HepG2 (cell line): ENCODE measurements at regions of chr3 and their contacts with region 1.

Region 1: GRCh38 chr3:51941798-51942602 is at the starts of genes PARP3 and RRP9:
- DNase-seq: peak; percentile 99
- ATAC-seq: peak; percentile 88
- H3K4me3 ChIP-seq: peak within 1 kb of the TSS; percentile 80 to 88 (median 84)
- H3K27ac ChIP-seq: peak within 1 kb of the TSS; percentile 93
- H3K4me1 ChIP-seq: peaks cover 33% of the 10 kb centered on the region
- H3K27me3 ChIP-seq: no peaks in the 10 kb centered on the region; a peak in 1 of 5 replicates
- CTCF ChIP-seq: peak; percentile 100
- EP300 ChIP-seq: peak in 1 of 2 experiments; percentile 20; a peak in 1 of 4 replicates
- POLR2A ChIP-seq: peak in 1 of 2 experiments; percentile 45; a peak in 1 of 4 replicates
- RAD21 ChIP-seq: peak; percentile 99
- total RNA-seq, gene PARP3: 7.7 and 11.2 TPM in 2 replicates
- total RNA-seq, gene RRP9: 39.4 and 44.0 TPM in 2 replicates

Region 2: GRCh38 chr3:51916418-51916817 is 25.6 kb before region 1 on chr3:
- CTCF ChIA-PET with region 1: no interaction called
- POLR2A ChIA-PET with region 1: no interaction called
- in situ Hi-C with region 1: no loop called
- intact Hi-C with region 1: no loop called
- DNase-seq: no peak
- ATAC-seq: no peak
- H3K4me3 ChIP-seq: no peak overlapping the region
- H3K27ac ChIP-seq: no peak overlapping the region
- H3K4me1 ChIP-seq: no peaks in the 10 kb centered on the region
- H3K27me3 ChIP-seq: 0 out of 5 replicates have a peak, but pooled peaks cover 0 to 1% of the 10 kb centered on the region in 2 experiments
- CTCF ChIP-seq: no peak
- EP300 ChIP-seq: no peak
- POLR2A ChIP-seq: no peak
- RAD21 ChIP-seq: no peak

Region 3: GRCh38 chr3:51967384-51968169 is 25.6 kb after region 1 on chr3 and contains the start of gene PCBP4:
- CTCF ChIA-PET with region 1: no interaction called
- POLR2A ChIA-PET with region 1: interaction called, 173 read pairs
- in situ Hi-C with region 1: no loop called
- intact Hi-C with region 1: no loop called
- DNase-seq: peak; percentile 70
- ATAC-seq: peak; percentile 76
- H3K4me3 ChIP-seq: peak within 1 kb of the TSS; percentile 72 to 89 (median 87)
- H3K27ac ChIP-seq: peak within 1 kb of the TSS; percentile 81
- H3K4me1 ChIP-seq: peaks cover 89% of the 10 kb centered on the region
- H3K27me3 ChIP-seq: no peaks in the 10 kb centered on the region
- CTCF ChIP-seq: no peak
- EP300 ChIP-seq: no peak
- POLR2A ChIP-seq: peak in 1 of 2 experiments; percentile 41; a peak in 1 of 4 replicates
- RAD21 ChIP-seq: no peak; the same call in 1 of the 2 replicates
- total RNA-seq, gene PCBP4: 32.5 and 36.8 TPM in 2 replicates

Region 4: GRCh38 chr3:51974963-51975851 is 33.2 kb after region 1 on chr3 and contains the start of gene ABHD14A:
- CTCF ChIA-PET with region 1: interaction called, 34 read pairs
- POLR2A ChIA-PET with region 1: interaction called, 173 read pairs
- in situ Hi-C with region 1: no loop called
- intact Hi-C with region 1: loop called (anchors 1 kb)
- DNase-seq: peak; percentile 37
- ATAC-seq: peak; percentile 81
- H3K4me3 ChIP-seq: peak within 1 kb of the TSS; percentile 75 to 82 (median 77)
- H3K27ac ChIP-seq: peak within 1 kb of the TSS; percentile 97
- H3K4me1 ChIP-seq: peaks cover 45% of the 10 kb centered on the region
- H3K27me3 ChIP-seq: no peaks in the 10 kb centered on the region; a peak in 1 of 5 replicates
- CTCF ChIP-seq: no peak; the same call in 1 of the 2 replicates
- EP300 ChIP-seq: no peak
- POLR2A ChIP-seq: peak in 1 of 2 experiments; percentile 60; a peak in 2 of 4 replicates
- RAD21 ChIP-seq: peak; percentile 60
- total RNA-seq, gene ABHD14A: 12.3 and 29.5 TPM in 2 replicates

Region 5: GRCh38 chr3:51982782-51983577 is 41.0 kb after region 1 on chr3 and contains the start of gene ACY1:
- CTCF ChIA-PET with region 1: interaction called, 19 read pairs
- POLR2A ChIA-PET with region 1: interaction called, 99 read pairs
- in situ Hi-C with region 1: no loop called
- intact Hi-C with region 1: loop called (anchors 2 kb)
- DNase-seq: peak; percentile 87
- ATAC-seq: peak; percentile 80
- H3K4me3 ChIP-seq: peak within 1 kb of the TSS; percentile 70 to 83 (median 73)
- H3K27ac ChIP-seq: peak within 1 kb of the TSS; percentile 94
- H3K4me1 ChIP-seq: peaks cover 51% of the 10 kb centered on the region
- H3K27me3 ChIP-seq: no peaks in the 10 kb centered on the region
- CTCF ChIP-seq: peak; percentile 3; the same call in 1 of the 2 replicates
- EP300 ChIP-seq: peak; percentile 19 to 73; a peak in 3 of 4 replicates
- POLR2A ChIP-seq: no peak; a peak in 1 of 4 replicates
- RAD21 ChIP-seq: 0 out of 2 replicates have a peak, but pooled peaks have one; percentile 3
- total RNA-seq, gene ACY1: 112 and 113 TPM in 2 replicates